Calu3 (cell line): ENCODE measurements at regions of chr1 and their contacts with region 1.

Region 1: GRCh38 chr1:38834937-38835827 is 24.4 kb downstream of the RRAGC start:
- DNase-seq: peak; percentile 65
- H3K4me3 Mint-ChIP-seq: no peak overlapping the region
- H3K27ac Mint-ChIP-seq: no peak overlapping the region
- H3K4me1 Mint-ChIP-seq: no peaks in the 10 kb centered on the region
- H3K27me3 Mint-ChIP-seq: peaks cover 38% of the 10 kb centered on the region
- CTCF ChIP-seq: peak; percentile 55

Region 2: GRCh38 chr1:38026592-38027200 is 808.5 kb before region 1 on chr1:
- CTCF ChIA-PET with region 1: interaction called, 4 read pairs
- intact Hi-C with region 1: loop called (anchors 2 kb)
- DNase-seq: peak; percentile 63
- H3K4me3 Mint-ChIP-seq: no peak overlapping the region
- H3K27ac Mint-ChIP-seq: no peak overlapping the region
- H3K4me1 Mint-ChIP-seq: no peaks in the 10 kb centered on the region
- H3K27me3 Mint-ChIP-seq: no peaks in the 10 kb centered on the region
- CTCF ChIP-seq: peak; percentile 63

Region 3: GRCh38 chr1:38489844-38490270 is 345.3 kb before region 1 on chr1:
- CTCF ChIA-PET with region 1: no interaction called
- intact Hi-C with region 1: no loop called
- DNase-seq: peak; percentile 58
- H3K4me3 Mint-ChIP-seq: no peak overlapping the region
- H3K27ac Mint-ChIP-seq: no peak overlapping the region
- H3K4me1 Mint-ChIP-seq: no peaks in the 10 kb centered on the region
- H3K27me3 Mint-ChIP-seq: peaks cover 84% of the 10 kb centered on the region
- CTCF ChIP-seq: peak; percentile 54